ENCODE measurements at regions of chr16 and their contacts with region 1.

Region 1: GRCh38 chr16:30867747-30868146 is 26.1 kb downstream of the BCL7C start:
- DNase-seq: peak; percentile 12
- ATAC-seq: no peak
- H3K4me3 ChIP-seq: no peak overlapping the region
- H3K27ac ChIP-seq: no peak overlapping the region
- H3K4me1 ChIP-seq: no peaks in the 10 kb centered on the region
- H3K27me3 ChIP-seq: no peaks in the 10 kb centered on the region
- CTCF ChIP-seq: peak; percentile 27; the same call in 1 of the 2 replicates

Region 2: GRCh38 chr16:30688675-30689074 is 179.1 kb before region 1 on chr16:
- CTCF ChIA-PET with region 1: no interaction called
- POLR2A ChIA-PET with region 1: interaction called, 17 read pairs
- intact Hi-C with region 1: no loop called
- DNase-seq: no peak
- ATAC-seq: no peak
- H3K4me3 ChIP-seq: no peak overlapping the region
- H3K27ac ChIP-seq: no peak overlapping the region
- H3K4me1 ChIP-seq: no peaks in the 10 kb centered on the region
- H3K27me3 ChIP-seq: no peaks in the 10 kb centered on the region
- CTCF ChIP-seq: no peak

Region 3: GRCh38 chr16:30853758-30854157 is 14.0 kb before region 1 on chr16:
- CTCF ChIA-PET with region 1: interaction called, 11 read pairs
- POLR2A ChIA-PET with region 1: no interaction called
- intact Hi-C with region 1: no loop called
- DNase-seq: peak; percentile 66
- ATAC-seq: peak; percentile 48; the same call in 1 of the 2 replicates
- H3K4me3 ChIP-seq: no peak overlapping the region
- H3K27ac ChIP-seq: peak overlapping the region; percentile 45
- H3K4me1 ChIP-seq: peaks cover 28% of the 10 kb centered on the region
- H3K27me3 ChIP-seq: no peaks in the 10 kb centered on the region
- CTCF ChIP-seq: no peak

Region 4: DNA sequence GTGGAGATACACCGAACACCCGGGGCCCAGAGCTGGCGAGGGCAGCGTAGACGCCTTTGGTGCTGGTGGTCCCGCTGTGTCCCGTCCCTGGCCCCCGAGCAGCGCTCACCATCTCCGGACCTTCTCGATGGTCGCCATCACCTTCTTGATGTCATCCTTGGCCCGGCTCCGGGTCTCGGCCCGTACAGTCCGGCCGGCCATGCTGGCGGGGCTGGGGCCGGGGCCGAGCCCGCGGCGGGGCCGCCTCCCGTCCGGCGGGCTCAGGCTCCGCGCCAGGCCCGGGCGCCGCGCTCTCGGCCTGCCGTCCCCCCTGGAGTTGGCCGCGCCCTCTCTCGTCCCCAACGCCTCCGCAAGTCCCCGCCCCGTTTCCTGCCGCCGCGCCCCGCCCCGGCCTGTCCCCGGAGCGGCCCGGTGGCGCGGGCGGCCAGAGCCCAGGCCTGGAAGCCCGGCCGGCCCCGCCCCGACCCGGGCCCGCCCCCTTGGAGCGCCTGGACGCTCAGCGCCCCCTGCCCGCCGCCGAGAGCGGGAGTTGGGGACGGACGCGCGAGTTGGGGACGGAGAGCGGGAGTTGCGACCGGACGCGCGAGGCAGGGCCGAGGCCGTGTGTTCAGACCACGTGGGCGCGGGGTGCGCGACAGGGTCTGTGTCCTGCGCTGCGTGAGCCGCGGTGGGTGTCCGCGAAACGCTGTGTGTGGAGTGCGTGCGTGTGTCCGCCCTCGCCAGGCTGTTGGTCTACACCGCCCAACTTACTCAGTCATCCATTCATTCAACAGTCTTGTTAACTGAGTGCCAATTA is 26.2 kb after region 1 on chr16 and contains the start of gene BCL7C:
- CTCF ChIA-PET with region 1: no interaction called
- POLR2A ChIA-PET with region 1: no interaction called
- intact Hi-C with region 1: no loop called
- DNase-seq: peak; percentile 87
- ATAC-seq: peak; percentile 70
- H3K4me3 ChIP-seq: peak within 1 kb of the TSS; percentile 87
- H3K27ac ChIP-seq: peak within 1 kb of the TSS; percentile 86
- H3K4me1 ChIP-seq: peaks cover 28% of the 10 kb centered on the region
- H3K27me3 ChIP-seq: no peaks in the 10 kb centered on the region
- CTCF ChIP-seq: peak; percentile 34
- total RNA-seq, gene BCL7C: 75.6 and 97.3 TPM in 2 replicates